MCF 10A (cell line): ENCODE measurements at regions of chr1 and their contacts with region 1.

Region 1: DNA sequence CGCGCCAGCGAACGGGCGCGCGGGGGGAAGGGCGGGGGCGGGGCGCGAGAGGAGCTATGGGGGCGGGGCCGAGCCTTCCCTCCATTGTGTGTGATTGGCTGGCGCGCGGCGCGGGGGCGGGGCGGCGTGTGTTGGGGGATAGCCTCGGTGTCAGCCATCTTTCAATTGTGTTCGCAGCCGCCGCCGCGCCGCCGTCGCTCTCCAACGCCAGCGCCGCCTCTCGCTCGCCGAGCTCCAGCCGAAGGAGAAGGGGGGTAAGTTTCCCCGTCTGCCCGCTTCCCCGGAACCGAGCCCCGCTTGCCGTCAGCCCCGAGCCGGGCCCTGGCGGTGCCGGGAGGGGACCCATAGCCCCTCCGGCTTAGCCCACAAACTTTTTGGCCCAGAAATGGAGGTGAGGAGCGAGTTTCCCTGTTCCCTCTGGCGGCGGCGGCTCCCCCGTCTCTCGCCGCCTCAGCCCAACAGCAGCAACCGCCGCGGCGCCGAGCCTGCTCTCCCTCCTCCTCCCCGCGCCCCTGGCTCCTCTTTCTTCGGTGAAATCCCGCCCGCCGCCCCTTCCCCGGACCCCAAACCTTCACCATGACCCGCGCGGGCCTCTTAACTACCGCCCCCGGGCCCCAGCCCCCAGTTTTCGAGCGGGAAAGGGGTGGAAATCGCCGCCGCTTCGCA is at the start of gene H3-3A:
- DNase-seq: peak; percentile 100
- H3K4me3 Mint-ChIP-seq: peak within 1 kb of the TSS; percentile 100
- H3K27ac Mint-ChIP-seq: peak within 1 kb of the TSS; percentile 99
- H3K4me1 Mint-ChIP-seq: peaks cover 35% of the 10 kb centered on the region
- H3K27me3 Mint-ChIP-seq: no peaks in the 10 kb centered on the region
- CTCF ChIP-seq: no peak
- total RNA-seq, gene H3-3A: 635 and 710 TPM in 2 replicates

Region 2: GRCh38 chr1:225474986-225475820 is 587.5 kb before region 1 on chr1:
- CTCF ChIA-PET with region 1: interaction called, 6 read pairs
- POLR2A ChIA-PET with region 1: interaction called, 4 read pairs
- intact Hi-C with region 1: loop called (anchors 1 kb)
- DNase-seq: peak; percentile 85
- H3K4me3 Mint-ChIP-seq: no peak overlapping the region
- H3K27ac Mint-ChIP-seq: no peak overlapping the region
- H3K4me1 Mint-ChIP-seq: no peaks in the 10 kb centered on the region
- H3K27me3 Mint-ChIP-seq: no peaks in the 10 kb centered on the region
- CTCF ChIP-seq: peak; percentile 100

Region 3: DNA sequence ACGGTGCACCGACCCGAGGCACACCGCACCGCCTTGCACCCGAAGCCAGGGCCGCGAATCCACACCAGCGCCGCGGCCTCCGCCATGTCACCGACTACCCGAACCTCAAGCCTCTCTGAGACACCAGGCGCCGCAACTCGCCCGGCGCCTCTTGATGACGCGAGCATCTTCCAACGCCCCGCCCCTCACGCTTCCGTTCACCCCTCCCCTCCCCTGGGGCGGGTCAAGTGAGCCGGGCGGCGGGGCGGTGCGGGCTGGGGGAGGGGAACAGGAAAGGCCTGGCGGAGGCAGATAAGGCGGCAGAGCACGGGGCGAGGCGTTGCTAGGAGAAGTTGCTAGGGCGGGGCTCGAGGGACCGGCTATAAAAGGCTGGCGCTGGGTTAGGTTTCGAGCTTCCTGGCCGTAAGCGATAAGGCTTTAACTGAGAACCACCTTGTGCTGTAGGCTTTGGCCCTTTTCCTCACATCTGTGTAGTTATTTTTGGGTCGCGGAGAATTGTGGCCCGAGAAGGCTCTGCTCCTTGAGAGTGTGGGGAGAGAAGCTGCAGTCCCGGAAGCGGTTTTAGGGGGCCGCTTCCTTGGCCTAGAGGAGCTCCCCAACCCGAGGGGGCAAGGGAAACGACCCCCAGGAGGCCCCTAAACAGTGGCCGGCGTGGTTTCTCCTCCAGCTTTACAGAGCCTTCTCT is 63.3 kb before region 1 on chr1 and contains the start of gene SDE2:
- CTCF ChIA-PET with region 1: interaction called, 17 read pairs
- POLR2A ChIA-PET with region 1: interaction called, 153 read pairs
- intact Hi-C with region 1: loop called (anchors 1 kb)
- DNase-seq: peak; percentile 100
- H3K4me3 Mint-ChIP-seq: peak within 1 kb of the TSS; percentile 88
- H3K27ac Mint-ChIP-seq: peak within 1 kb of the TSS; percentile 99
- H3K4me1 Mint-ChIP-seq: peaks cover 33% of the 10 kb centered on the region
- H3K27me3 Mint-ChIP-seq: no peaks in the 10 kb centered on the region
- CTCF ChIP-seq: no peak
- total RNA-seq, gene SDE2: 59.3 and 61.8 TPM in 2 replicates

Region 4: GRCh38 chr1:226047495-226047894 is 15.2 kb before region 1 on chr1:
- CTCF ChIA-PET with region 1: interaction called, 7 read pairs
- POLR2A ChIA-PET with region 1: interaction called, 94 read pairs
- intact Hi-C with region 1: no loop called
- DNase-seq: no peak
- H3K4me3 Mint-ChIP-seq: no peak overlapping the region
- H3K27ac Mint-ChIP-seq: no peak overlapping the region
- H3K4me1 Mint-ChIP-seq: peaks cover 10% of the 10 kb centered on the region
- H3K27me3 Mint-ChIP-seq: no peaks in the 10 kb centered on the region
- CTCF ChIP-seq: no peak

Region 5: GRCh38 chr1:226100436-226101391 is 38.0 kb after region 1 on chr1:
- CTCF ChIA-PET with region 1: interaction called, 41 read pairs
- POLR2A ChIA-PET with region 1: interaction called, 7 read pairs
- intact Hi-C with region 1: no loop called
- DNase-seq: no peak
- H3K4me3 Mint-ChIP-seq: peak overlapping the region; percentile 47
- H3K27ac Mint-ChIP-seq: no peak overlapping the region
- H3K4me1 Mint-ChIP-seq: peaks cover 28% of the 10 kb centered on the region
- H3K27me3 Mint-ChIP-seq: no peaks in the 10 kb centered on the region
- CTCF ChIP-seq: no peak

Region 6: DNA sequence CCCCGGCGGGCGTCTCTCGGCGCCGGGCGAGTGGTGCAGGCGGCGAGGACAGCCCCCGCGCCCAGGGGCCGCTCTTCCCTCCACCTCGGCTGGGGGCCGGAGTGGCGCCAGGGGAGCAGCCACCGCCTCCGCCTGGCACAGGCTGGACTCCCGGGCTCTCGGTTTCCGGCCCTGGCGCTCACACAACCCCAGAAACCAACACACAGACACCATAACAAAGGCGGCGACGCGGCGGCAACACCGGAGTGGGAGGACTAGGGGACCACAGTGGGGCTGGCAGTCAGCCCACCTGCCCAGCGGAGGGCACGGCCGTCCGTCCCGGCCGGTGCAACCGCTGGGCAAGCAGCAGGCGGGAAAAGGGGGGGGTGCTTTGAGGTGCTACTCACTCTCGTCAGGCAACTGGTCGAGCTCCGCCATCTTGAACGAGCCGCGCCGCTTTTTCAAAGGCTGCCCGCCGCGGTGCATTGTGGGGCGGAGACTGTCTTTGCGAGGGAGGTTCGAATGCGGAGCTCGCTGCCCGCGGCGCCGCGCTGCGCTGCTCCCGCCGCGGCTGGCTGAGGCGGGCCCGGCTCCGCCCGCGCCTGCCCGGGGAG is 246.1 kb after region 1 on chr1 and contains the start of gene LIN9:
- CTCF ChIA-PET with region 1: interaction called, 6 read pairs
- POLR2A ChIA-PET with region 1: interaction called, 26 read pairs
- intact Hi-C with region 1: no loop called
- DNase-seq: peak; percentile 98
- H3K4me3 Mint-ChIP-seq: peak within 1 kb of the TSS; percentile 84
- H3K27ac Mint-ChIP-seq: peak within 1 kb of the TSS; percentile 82
- H3K4me1 Mint-ChIP-seq: peaks cover 34% of the 10 kb centered on the region
- H3K27me3 Mint-ChIP-seq: no peaks in the 10 kb centered on the region
- CTCF ChIP-seq: no peak
- total RNA-seq, gene LIN9: 10.3 and 10.4 TPM in 2 replicates